PC-9 (cell line): ENCODE measurements at regions of chr6 and their contacts with region 1.

Region 1: DNA sequence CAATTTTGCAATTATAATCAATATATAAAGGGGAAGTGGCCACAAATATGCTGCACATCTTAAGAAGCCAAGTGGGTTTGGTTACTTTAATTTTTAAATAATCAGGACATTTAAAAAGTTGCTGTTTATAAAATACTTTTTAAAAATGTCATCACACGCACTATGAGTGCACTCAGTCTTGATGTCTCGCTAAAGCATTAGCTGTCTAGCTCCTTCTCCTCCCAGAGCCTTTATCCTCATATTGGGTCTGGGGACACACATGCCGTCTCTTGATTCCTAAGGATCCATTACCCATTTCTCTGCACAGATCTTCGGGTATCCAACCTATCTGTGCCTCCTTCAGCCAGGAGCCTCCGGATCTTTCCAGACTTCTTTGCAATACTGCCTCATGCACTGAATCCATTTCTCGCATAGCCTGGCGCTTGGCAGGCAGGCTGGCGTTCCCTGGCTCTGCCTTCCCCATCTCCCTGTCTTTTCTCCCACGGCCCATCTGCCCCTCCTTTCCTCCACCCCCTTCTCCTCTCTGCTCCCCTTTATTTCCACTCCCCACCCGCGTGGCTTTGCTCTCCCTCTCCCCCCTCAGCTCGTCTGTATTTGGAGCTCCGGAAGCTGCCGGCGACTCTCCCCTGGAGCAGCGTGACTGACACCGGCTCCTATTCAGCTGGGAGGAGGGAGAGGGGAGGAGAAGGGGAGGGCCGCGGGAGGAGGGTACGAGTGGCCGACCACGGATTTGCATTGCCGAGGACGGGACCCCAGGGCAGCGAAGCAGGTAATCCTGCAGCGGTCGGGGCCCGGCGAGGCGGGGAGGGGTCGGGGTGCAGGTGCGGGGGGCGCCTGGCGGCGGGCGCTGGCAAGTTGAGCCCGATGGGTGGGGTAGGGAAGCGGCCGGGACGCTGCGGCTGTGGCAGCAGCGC is at the start of gene CAP2:
- DNase-seq: peak; percentile 45 to 74
- H3K4me3 ChIP-seq: peak within 1 kb of the TSS; percentile 74
- H3K27ac ChIP-seq: peak within 1 kb of the TSS; percentile 50
- H3K4me1 ChIP-seq: peaks cover 37% of the 10 kb centered on the region
- H3K27me3 ChIP-seq: no peaks in the 10 kb centered on the region
- CTCF ChIP-seq: no peak
- total RNA-seq, gene CAP2: 10.0 and 12.0 TPM in 2 replicates

Region 2: DNA sequence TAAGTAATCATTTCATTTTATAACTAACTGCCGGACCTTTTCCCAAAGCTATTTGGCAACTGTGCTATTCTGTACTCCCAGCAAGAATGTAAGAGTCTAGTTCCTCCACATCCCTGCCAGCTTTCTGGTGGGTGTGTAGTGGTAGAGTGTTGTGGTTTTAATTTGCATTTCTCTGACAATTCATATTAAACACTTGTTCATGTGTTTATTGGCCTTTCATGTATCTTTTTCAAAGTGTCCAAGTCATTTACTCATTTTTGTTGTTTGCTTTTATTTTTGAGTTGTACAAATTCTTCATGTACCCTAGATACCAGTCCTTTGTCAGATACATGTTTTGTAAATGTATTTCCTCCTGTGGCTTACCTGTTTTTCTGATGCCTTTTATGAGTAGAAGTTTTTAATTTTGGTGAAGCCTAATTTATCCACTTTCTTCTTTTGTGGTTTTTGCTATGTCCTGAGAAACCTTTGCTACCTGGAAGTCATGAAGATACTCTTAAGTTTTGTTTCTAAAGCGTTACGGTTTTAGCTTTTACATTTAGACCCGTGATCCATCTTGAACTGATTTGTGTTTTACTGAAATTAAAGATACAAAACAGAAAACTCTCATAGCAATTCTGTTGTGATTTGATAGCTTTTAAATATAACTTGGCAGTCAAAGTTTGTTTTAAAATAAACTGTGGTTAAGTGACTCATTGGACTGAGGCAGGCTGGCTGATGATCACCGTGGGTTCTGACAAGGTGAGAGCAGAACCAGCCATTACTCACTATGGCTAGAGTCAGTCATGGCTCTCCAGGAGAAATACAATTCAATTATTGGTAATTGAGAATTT is 1256.4 kb before region 1 on chr6:
- CTCF ChIA-PET with region 1: no interaction called
- POLR2A ChIA-PET with region 1: interaction called, 13 read pairs
- intact Hi-C with region 1: no loop called
- DNase-seq: peak; percentile 17 to 63
- H3K4me3 ChIP-seq: peak overlapping the region; percentile 36; the same call in 1 of the 2 replicates
- H3K27ac ChIP-seq: peak overlapping the region; percentile 58
- H3K4me1 ChIP-seq: peaks cover 63% of the 10 kb centered on the region
- H3K27me3 ChIP-seq: no peaks in the 10 kb centered on the region
- CTCF ChIP-seq: no peak

Region 3: GRCh38 chr6:16723826-16724225 is 669.4 kb before region 1 on chr6:
- CTCF ChIA-PET with region 1: no interaction called
- POLR2A ChIA-PET with region 1: no interaction called
- intact Hi-C with region 1: loop called (anchors 10 kb)
- DNase-seq: peak; percentile 34 to 54
- H3K4me3 ChIP-seq: no peak overlapping the region
- H3K27ac ChIP-seq: peak overlapping the region; percentile 20; the same call in 1 of the 2 replicates
- H3K4me1 ChIP-seq: peaks cover 28% of the 10 kb centered on the region
- H3K27me3 ChIP-seq: no peaks in the 10 kb centered on the region
- CTCF ChIP-seq: no peak

Region 4: DNA sequence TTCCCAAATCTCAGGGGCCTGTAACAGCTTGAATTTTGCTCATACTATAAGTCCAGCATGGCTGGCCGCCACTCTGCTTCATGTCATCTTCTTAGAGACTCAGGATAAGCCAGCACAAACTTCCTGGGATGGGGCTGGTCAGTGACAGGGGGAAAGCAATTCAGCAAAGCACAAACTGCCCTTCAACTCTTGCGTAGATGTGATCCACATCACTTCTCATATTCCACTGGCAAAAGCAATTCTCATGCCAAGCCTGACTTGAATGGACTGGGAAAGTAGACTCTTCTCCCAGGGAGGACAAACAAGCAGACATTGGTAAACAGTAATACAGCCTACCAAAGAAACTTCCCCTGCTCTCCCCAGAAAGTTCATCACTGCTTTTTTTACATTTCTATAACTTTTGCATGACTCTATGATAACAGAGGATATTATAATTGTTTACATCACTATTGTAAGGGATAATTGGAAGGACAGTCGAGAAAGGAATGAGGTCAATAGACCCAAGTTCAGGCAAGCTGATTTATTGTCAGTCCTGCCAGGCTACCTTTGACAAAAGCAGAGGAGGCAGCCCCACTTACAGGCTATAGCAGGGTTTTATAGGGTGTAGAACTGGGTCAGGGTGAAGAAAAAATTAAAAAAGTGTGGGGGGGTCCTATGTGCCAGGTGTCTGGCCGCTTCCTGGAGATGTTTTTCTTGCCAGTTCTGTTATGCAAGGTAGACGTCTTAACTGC is 74.6 kb before region 1 on chr6:
- CTCF ChIA-PET with region 1: no interaction called
- POLR2A ChIA-PET with region 1: no interaction called
- intact Hi-C with region 1: no loop called
- DNase-seq: no peak
- H3K4me3 ChIP-seq: no peak overlapping the region
- H3K27ac ChIP-seq: no peak overlapping the region
- H3K4me1 ChIP-seq: no peaks in the 10 kb centered on the region
- H3K27me3 ChIP-seq: peaks cover 9% of the 10 kb centered on the region
- CTCF ChIP-seq: no peak

Region 5: DNA sequence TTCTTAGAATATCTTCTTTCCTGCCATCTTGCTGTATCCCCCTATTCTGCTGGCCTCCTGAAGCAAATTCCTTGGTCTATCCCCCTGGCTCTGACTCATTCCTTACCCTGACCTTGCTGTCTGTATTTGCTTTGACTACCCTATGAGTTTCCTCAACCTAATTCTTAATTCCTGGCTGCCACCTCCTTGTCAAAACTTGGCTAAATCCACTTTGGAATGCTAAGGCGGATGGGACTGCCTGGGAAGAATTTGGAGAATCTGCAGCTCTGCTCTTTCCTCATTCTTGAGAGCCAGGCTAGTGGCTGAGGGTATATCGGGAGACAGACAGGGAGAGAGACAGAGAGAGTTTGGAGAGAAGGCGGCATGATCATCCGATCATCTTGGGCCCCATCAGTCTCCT is 24.6 kb after region 1 on chr6:
- CTCF ChIA-PET with region 1: no interaction called
- POLR2A ChIA-PET with region 1: interaction called, 33 read pairs
- intact Hi-C with region 1: loop called (anchors 1 kb)
- DNase-seq: peak; percentile 61 to 70
- H3K4me3 ChIP-seq: no peak overlapping the region
- H3K27ac ChIP-seq: peak overlapping the region; percentile 67
- H3K4me1 ChIP-seq: peaks cover 23% of the 10 kb centered on the region; the same call in 1 of the 2 replicates
- H3K27me3 ChIP-seq: no peaks in the 10 kb centered on the region
- CTCF ChIP-seq: no peak

Region 6: GRCh38 chr6:17493286-17493685 is 100.1 kb after region 1 on chr6:
- CTCF ChIA-PET with region 1: no interaction called
- POLR2A ChIA-PET with region 1: interaction called, 10 read pairs
- intact Hi-C with region 1: no loop called
- DNase-seq: peak in 1 of 2 experiments; percentile 8
- H3K4me3 ChIP-seq: no peak overlapping the region
- H3K27ac ChIP-seq: no peak overlapping the region
- H3K4me1 ChIP-seq: no peaks in the 10 kb centered on the region
- H3K27me3 ChIP-seq: no peaks in the 10 kb centered on the region
- CTCF ChIP-seq: no peak

Region 7: DNA sequence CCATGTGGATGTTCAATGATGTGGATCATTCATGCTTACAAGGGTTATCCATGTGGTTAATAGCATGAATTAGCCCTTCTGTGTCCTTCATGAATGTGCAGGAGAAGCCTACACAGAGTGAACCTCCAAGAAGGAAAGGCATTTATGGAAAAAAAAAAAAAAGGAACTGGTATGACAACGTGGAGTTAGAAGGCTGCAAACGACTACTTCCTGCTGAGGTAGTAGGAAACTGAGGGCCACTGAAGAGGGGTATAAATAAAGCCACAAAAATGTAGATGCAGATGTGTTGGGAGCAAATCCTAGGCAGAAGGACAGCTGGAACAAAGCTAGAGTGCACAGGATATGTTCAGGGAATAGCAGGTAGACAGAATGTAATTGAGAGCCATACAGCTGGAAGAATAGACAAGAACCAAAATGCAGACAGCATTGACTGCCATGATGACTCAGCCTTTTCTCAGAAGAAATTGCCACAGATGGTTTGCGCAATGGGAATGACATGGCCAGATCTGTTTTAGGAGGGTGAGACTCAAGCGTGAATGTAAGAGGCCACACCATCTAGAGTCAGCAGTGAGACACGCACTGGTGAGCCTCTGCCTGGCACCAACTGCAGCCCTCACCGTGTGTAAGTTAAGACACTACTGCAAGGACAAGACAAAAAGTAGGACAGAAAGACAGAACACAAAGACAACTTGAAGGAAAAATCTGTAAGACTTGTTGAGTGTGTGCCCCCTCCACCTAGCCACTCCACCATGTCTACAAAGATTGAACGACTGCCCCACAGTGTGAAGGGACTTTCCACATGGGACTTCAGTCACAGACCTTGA is 514.4 kb after region 1 on chr6:
- CTCF ChIA-PET with region 1: no interaction called
- POLR2A ChIA-PET with region 1: no interaction called
- intact Hi-C with region 1: no loop called
- DNase-seq: peak; percentile 78 to 94
- H3K4me3 ChIP-seq: no peak overlapping the region; the same call in none of the 2 replicates
- H3K27ac ChIP-seq: peak overlapping the region; percentile 98
- H3K4me1 ChIP-seq: peaks cover 43% of the 10 kb centered on the region
- H3K27me3 ChIP-seq: no peaks in the 10 kb centered on the region
- CTCF ChIP-seq: peak; percentile 16; the same call in 1 of the 2 replicates

Region 8: DNA sequence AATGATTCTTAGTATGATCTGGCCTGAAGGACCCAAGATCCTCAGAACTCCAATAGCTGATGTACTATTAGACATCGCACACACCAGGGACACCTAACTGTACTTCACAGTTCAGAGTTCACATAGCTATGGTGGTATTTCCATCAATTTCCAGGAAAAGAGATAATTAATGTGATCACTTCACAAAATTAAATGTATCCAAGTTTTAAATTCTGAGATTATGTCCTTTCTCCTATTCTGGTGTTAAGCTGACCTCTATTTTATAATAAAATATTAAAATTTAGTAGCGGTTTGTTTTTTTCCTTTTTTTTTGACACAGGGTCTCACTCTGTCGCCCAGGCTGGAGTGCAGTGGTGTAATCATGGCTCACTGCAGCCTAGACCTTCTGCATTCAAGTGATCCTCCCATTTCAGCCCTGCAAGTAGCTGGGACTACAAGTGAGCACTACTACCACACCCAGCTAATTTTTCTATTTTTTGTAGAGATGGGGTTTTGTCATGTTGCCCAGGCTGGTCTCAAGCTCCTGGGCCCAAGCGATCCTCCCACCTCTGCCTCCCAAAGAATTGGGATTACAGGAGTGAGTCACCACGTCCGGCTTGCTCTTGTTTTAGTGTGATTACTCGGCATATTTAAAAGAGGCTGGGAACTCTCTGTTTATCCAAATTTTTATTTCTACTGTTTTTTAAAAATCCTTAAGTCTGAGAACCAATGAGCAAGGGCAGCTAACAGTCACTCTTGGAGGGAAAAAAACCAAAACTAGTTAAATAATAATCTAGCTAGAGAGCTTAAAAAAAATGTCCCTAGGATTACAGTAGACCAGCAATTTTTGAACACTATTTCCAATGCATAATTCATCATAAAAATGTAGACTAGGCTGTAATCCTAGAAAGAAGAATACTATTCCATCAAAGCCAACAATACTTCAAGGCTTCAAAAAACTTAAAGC is 578.2 kb after region 1 on chr6:
- CTCF ChIA-PET with region 1: no interaction called
- POLR2A ChIA-PET with region 1: interaction called, 19 read pairs
- intact Hi-C with region 1: no loop called
- DNase-seq: peak in 1 of 2 experiments; percentile 33
- H3K4me3 ChIP-seq: no peak overlapping the region
- H3K27ac ChIP-seq: peak overlapping the region; percentile 37
- H3K4me1 ChIP-seq: peaks cover 10% of the 10 kb centered on the region; the same call in 1 of the 2 replicates
- H3K27me3 ChIP-seq: no peaks in the 10 kb centered on the region
- CTCF ChIP-seq: no peak